ENCODE measurements at regions of chr1 and their contacts with region 1.

Region 1: DNA sequence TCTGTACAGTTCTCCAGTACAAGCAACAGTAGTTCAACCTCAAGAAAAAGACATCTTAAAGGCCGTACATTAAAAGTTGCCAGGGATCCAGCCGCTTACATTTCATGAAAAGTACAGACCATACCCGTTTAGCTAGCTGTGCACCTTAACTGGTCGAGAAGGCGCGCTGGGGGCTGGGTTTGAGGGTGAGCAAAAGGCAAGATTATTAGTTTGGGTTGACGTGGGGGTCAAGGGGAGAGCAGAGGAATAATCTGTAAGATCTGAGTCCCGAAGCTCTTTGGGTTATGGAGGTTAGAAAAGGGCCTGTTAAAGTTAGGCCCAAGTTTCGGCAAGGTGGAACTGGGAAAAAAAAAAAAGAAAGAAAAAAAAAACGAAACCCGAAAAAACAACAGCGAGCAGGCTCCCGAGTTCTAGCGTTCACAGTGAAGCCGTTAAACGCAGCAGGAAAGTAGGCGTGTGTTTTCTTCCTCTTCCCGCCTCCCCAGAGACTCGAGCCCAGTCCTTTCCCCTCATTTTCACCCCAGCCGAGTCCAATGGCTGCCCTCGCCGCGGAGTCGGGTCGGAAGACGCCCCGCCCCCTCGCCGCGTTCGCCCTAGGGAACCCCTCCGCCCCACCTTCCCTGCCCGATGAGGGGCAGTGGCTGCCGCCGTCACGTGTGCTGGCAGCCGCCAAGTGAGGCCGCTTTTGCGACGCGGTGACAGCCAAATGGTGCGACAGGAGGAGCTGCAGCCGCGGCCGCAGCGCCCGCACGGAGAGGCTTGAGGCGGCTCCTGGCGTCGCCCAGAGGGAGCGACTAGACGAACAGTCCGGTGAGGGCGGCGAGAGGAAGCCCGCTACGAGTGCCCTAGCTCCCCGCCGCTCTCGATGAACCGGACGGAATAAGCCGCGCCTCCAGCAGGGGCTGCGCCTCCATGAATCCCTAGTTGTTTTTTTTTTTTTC is at the start of gene PKN2:
- DNase-seq: peak; percentile 97
- H3K4me3 ChIP-seq: peak within 1 kb of the TSS; percentile 74
- H3K27ac ChIP-seq: peak within 1 kb of the TSS; percentile 90
- H3K27me3 ChIP-seq: no peaks in the 10 kb centered on the region
- CTCF ChIP-seq: peak; percentile 13; the same call in 1 of the 2 replicates
- polyA plus RNA-seq, gene PKN2: 23.1 and 35.9 TPM in 2 replicates

Region 2: DNA sequence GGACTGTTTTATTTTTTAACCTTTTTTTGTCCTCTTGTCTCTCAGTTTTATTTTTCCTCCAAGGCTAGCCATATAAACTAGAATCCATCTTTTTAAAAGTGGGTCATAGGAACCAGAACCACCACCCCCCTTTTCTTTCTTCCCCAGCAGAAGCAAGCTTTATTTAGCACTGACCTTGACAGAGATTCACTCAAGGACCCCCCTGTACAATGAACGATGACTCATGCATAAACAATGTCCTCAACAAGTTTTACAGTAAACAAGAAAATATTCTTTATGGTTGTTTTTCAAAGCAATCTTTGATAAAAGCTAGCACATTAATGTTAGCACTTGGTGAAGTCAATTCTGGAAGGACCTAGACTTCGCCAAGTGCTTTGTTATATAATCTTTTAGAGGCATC is 14.3 kb after region 1 on chr1:
- CTCF ChIA-PET with region 1: interaction called, 13 read pairs
- POLR2A ChIA-PET with region 1: no interaction called
- DNase-seq: no peak
- H3K4me3 ChIP-seq: no peak overlapping the region
- H3K27ac ChIP-seq: no peak overlapping the region
- H3K27me3 ChIP-seq: no peaks in the 10 kb centered on the region
- CTCF ChIP-seq: no peak

Measured in AG04450 (cell line).